IMR-90 (cell line): ENCODE measurements at regions of chr15 and their contacts with region 1.

Region 1: DNA sequence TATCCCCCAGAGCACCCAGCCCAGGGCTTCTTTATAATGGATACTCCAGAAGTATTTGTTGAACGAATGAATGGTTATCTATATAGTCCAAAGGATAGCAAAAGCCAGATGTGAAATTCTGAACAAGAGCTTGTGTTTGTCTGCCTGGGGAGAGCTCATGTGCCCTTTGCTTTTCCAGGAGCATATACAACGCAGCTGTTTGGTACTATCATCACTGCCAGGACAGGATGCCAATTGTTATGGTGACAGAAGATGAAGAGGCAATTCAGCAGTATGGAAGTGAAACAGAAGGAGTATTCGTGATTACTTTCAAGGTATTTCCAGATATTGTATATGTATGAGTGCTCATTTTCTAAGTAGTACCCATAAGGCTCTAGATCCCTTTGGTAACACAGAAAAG is 15.2 kb downstream of the DIS3L start:
- DNase-seq: no peak
- ATAC-seq: no peak
- H3K4me3 ChIP-seq: no peak overlapping the region
- H3K27ac ChIP-seq: no peak overlapping the region
- H3K4me1 ChIP-seq: no peaks in the 10 kb centered on the region
- H3K27me3 ChIP-seq: no peaks in the 10 kb centered on the region
- CTCF ChIP-seq: no peak
- POLR2A ChIP-seq: no peak
- RAD21 ChIP-seq: no peak

Region 2: GRCh38 chr15:66328721-66329220 is 20.2 kb after region 1 on chr15:
- CTCF ChIA-PET with region 1: interaction called, 10 read pairs
- POLR2A ChIA-PET with region 1: no interaction called
- dilution Hi-C with region 1: no loop called
- in situ Hi-C with region 1: no loop called
- intact Hi-C with region 1: no loop called
- DNase-seq: no peak
- ATAC-seq: no peak
- H3K4me3 ChIP-seq: no peak overlapping the region
- H3K27ac ChIP-seq: no peak overlapping the region
- H3K4me1 ChIP-seq: no peaks in the 10 kb centered on the region
- H3K27me3 ChIP-seq: no peaks in the 10 kb centered on the region
- CTCF ChIP-seq: no peak
- POLR2A ChIP-seq: no peak
- RAD21 ChIP-seq: no peak